Activated naive CD4-positive, alpha-beta T cell treated with anti-CD3 and anti-CD28 coated beads, Interleukin-2, amount 10 ng/mL, durations not matched to agents 7 days and 5 days (primary cell): ENCODE measurements at regions of chr2 and their contacts with region 1.

Region 1: DNA sequence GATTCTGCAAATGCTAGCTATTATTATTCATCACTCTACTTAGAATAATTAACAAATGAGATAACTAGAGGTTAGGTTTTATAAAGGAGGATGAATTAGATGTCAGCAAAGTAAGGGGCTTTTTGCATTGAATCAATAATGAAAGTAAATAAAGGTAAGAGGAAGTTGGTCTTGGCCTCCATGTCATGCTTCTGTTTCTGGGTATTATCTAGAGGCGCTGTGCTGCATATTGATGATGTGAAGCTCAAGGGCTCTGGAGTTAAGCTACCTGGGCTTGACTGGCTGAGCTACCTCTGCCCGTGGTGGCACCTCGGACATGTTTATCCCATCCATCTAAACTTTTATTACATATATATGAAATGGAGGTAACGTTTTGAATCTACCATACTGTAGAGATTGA is 350.9 kb downstream of the PARD3B start:
- DNase-seq: no peak
- H3K4me3 Mint-ChIP-seq: no peak overlapping the region
- H3K27ac Mint-ChIP-seq: no peak overlapping the region
- H3K4me1 Mint-ChIP-seq: peaks cover 30% of the 10 kb centered on the region
- H3K27me3 Mint-ChIP-seq: no peaks in the 10 kb centered on the region

Region 2: DNA sequence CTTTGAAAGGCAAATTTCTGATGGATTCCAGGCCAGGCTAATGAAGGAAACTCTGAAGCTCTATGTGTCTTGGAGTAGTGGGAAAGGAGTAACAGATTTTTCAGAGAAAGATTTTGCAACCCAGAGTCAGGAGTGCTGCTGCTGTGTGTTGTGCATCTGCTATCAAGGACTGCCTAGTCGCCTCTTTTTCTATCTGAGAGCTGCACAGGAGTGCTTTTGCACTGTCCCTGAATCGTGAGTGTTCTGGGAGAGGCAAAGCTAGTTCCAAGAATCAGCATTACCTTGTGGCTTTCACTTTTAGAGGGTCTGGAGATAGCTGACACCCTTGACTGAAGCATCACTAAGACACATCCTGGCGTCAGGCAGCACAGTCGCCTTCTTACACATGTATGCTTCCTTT is 14.5 kb before region 1 on chr2:
- CTCF ChIA-PET with region 1: interaction called, 11 read pairs
- DNase-seq: peak; percentile 66
- H3K4me3 Mint-ChIP-seq: peak overlapping the region; percentile 66
- H3K27ac Mint-ChIP-seq: peak overlapping the region; percentile 96
- H3K4me1 Mint-ChIP-seq: peaks cover 77% of the 10 kb centered on the region
- H3K27me3 Mint-ChIP-seq: no peaks in the 10 kb centered on the region

Region 3: DNA sequence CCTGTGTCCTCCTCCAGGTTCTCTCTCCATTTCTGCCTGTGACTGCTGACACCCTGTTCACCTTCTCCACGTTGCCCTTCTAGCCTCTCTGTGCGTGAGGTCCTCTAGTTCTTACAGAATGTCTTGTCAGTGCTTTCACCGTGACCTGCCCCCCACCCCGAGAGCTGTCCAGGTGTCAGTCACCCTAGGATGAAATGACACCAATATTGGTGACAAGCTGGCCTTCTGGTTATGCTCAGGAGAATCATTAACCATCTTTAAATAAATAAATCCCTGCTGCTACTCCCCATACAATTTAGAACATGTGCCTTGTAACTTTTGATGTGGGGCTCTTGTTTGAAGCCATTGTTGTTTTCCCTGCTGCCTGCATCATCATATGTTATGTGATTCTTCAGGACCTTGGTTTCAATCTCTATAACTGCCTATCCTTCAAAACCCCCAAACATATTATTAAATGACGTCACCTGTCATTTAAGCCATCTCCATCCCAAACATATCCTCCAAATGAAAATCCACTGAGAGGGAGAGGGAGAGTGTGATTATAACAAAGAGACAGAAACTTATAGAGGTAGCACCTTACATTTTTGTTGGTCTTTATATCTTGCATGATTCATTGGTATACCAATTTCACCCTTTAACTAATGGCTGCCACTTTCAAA is 145.5 kb after region 1 on chr2:
- CTCF ChIA-PET with region 1: no interaction called
- DNase-seq: no peak
- H3K4me3 Mint-ChIP-seq: no peak overlapping the region
- H3K27ac Mint-ChIP-seq: peak overlapping the region; percentile 3
- H3K4me1 Mint-ChIP-seq: peaks cover 3% of the 10 kb centered on the region
- H3K27me3 Mint-ChIP-seq: no peaks in the 10 kb centered on the region